ENCODE measurements at regions of chr9 and their contacts with region 1.

Region 1: DNA sequence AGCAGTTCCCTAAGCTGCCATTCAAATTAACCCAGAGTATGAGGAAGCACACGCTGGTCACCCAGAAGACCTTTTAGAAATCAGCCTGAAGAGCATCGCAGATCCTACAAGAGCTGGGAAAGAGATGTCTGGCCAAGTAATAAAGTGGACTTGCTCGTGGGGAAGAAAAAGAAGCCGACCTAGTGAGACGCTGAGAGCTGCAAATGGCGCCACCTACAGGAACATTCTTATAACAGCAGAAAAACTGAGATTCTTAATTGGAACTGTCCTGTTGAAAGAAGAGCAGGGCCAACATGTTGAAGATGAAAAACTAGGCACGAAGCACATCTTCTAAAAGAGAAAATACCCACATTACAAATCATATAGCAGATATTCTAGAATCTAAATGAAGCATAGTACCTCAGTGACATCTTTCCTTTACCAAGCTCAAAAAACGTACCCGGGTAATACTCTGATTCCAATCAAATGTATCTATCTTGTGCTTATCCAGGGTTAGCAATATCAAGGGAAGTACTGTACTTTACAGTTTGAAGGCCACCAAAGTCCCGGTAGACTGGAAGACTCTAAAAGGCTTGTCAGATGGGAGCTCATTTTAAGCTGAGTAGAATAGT is 3.9 kb upstream of the GNAQ start:
- DNase-seq: peak; percentile 41
- ATAC-seq: peak; percentile 31

Region 2: GRCh38 chr9:77616191-77616590 is 419.3 kb before region 1 on chr9:
- intact Hi-C with region 1: no loop called
- DNase-seq: no peak
- ATAC-seq: no peak

Region 3: DNA sequence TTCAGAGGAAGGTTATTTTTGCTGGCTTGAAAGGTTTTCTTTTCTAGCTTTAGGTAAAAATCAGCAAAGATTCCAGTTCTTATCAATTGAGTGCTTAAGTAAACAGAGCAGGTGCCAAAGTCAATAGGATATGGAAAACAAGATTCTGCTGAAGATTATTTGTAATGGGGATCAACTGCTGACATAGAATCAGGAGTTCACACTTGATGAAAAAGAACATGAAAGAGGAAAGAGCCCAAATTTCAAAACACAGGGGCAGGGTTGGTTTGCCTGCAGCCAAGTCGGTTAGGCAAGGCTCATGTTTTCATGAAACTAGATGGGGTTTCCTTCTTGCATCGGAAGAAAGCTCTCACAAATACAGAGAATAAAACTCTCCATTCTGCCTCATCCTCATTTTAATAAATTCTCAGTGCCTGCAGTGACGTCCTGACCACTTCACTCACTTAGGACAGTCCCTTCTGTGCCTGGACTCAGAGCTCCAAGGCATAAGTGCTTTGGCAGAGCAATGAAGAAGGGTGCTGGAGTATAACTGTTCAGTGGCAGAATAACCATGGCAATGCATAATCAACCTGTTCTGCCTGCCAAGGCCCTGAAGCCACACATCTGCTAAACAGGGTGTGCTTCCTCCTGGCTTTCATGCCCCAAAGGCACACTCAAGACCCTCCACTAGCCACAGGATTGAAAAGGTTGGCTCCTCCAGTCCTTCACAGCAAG is 183.4 kb before region 1 on chr9:
- intact Hi-C with region 1: loop called (anchors 10 kb)
- DNase-seq: no peak
- ATAC-seq: no peak

Region 4: DNA sequence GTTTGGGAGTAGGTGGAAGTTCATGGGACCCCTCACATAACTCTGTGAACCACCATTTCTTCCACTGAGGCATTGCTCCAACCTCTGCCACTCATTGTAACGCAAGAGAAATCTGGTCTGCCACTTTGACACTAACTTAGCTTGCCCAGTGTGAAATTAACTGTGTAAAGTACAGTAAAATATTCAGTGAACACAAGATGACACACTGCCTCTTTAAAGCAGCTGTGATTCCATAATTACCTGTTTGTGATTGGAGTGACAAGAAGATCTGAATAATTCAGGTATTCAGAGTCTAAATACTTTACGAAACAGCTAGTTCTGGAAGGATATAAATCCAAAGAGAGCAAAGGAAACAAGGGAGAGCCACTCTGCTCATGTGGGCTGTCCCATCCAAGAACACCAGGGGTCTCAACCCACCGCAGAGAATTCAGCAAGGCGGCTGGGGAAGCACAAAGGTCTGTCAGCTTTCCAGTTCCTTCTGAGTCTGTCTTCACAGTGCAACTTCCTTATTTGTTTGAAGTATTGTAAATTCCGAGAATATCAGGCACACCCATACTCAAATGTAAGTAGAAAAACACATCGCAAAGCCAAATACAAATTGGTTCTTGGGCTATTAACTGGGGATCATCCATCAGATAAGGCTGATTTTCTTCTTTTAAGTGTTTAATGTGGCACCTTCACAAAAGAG is 90.8 kb before region 1 on chr9:
- intact Hi-C with region 1: no loop called
- DNase-seq: peak; percentile 54
- ATAC-seq: peak; percentile 72

Region 5: GRCh38 chr9:77977210-77977611 is 58.3 kb before region 1 on chr9:
- intact Hi-C with region 1: loop called (anchors 10 kb)
- DNase-seq: peak; percentile 79
- ATAC-seq: peak; percentile 83

Measured in Right ventricle myocardium superior (tissue), 1 donor.